OCI-LY7 (cell line): ENCODE measurements at regions of chr5 and their contacts with region 1.

Region 1: DNA sequence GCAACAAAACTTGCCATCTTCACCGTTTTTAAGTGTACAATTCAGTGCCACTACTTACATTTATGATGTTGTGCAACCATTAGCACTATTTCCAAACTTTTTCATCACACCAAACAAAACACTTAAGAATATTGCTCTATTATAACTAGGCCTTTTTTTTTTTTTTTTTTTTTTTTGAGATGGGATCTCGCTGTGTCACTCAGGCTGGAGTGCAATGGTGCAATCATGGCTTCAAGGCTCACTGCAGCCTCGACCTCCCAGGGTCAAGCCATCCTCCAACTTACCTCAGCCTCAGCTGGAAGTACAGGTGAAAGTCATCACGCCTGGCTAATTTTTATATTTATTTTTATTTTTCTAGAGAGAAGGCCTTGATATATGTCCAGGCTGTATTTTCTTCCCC is 22.3 kb upstream of the LMNB1 start:
- DNase-seq: no peak
- H3K4me3 ChIP-seq: no peak overlapping the region
- H3K27ac ChIP-seq: no peak overlapping the region
- H3K4me1 ChIP-seq: peaks cover 21% of the 10 kb centered on the region
- CTCF ChIP-seq: no peak

Region 2: DNA sequence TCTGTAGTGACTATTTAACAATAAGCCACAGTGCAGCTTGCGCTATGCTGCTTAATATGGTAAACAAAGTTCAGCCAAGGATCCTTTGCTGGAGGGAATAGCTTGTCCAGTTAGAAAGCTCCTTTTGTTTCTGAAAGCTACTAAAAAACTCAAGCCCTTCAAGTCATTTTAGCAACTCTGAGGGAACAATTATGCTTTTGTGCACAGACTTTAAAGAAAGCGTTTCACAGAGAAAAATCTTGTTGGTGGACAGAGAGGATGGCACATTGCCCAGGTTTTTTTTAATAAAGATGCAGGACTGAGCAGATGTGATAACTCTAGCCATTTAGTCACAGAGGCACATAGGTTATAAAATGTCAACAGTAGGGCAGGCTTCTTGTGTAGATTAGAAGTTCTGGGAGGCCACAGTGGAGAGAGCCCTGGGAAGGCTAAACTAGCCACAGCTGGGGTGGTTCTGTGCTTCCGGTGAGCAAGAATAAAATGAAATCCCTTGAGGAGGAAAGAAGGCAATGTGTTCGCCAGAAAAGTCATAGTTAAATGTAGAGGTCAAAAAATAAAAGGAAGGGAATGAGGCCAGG is 223.0 kb before region 1 on chr5:
- CTCF ChIA-PET with region 1: no interaction called
- POLR2A ChIA-PET with region 1: interaction called, 12 read pairs
- intact Hi-C with region 1: no loop called
- DNase-seq: no peak
- H3K4me3 ChIP-seq: no peak overlapping the region
- H3K27ac ChIP-seq: no peak overlapping the region
- H3K4me1 ChIP-seq: no peaks in the 10 kb centered on the region
- CTCF ChIP-seq: no peak

Region 3: GRCh38 chr5:126676195-126676624 is 78.4 kb before region 1 on chr5:
- CTCF ChIA-PET with region 1: no interaction called
- POLR2A ChIA-PET with region 1: interaction called, 10 read pairs
- intact Hi-C with region 1: no loop called
- DNase-seq: peak; percentile 82
- H3K4me3 ChIP-seq: no peak overlapping the region
- H3K27ac ChIP-seq: no peak overlapping the region
- H3K4me1 ChIP-seq: peaks cover 15% of the 10 kb centered on the region
- CTCF ChIP-seq: peak; percentile 95

Region 4: GRCh38 chr5:126695091-126695490 is 59.5 kb before region 1 on chr5:
- CTCF ChIA-PET with region 1: no interaction called
- POLR2A ChIA-PET with region 1: interaction called, 10 read pairs
- intact Hi-C with region 1: no loop called
- DNase-seq: no peak
- H3K4me3 ChIP-seq: no peak overlapping the region
- H3K27ac ChIP-seq: no peak overlapping the region
- H3K4me1 ChIP-seq: no peaks in the 10 kb centered on the region
- CTCF ChIP-seq: no peak